ENCODE measurements at regions of chr2 and their contacts with region 1.

Region 1: DNA sequence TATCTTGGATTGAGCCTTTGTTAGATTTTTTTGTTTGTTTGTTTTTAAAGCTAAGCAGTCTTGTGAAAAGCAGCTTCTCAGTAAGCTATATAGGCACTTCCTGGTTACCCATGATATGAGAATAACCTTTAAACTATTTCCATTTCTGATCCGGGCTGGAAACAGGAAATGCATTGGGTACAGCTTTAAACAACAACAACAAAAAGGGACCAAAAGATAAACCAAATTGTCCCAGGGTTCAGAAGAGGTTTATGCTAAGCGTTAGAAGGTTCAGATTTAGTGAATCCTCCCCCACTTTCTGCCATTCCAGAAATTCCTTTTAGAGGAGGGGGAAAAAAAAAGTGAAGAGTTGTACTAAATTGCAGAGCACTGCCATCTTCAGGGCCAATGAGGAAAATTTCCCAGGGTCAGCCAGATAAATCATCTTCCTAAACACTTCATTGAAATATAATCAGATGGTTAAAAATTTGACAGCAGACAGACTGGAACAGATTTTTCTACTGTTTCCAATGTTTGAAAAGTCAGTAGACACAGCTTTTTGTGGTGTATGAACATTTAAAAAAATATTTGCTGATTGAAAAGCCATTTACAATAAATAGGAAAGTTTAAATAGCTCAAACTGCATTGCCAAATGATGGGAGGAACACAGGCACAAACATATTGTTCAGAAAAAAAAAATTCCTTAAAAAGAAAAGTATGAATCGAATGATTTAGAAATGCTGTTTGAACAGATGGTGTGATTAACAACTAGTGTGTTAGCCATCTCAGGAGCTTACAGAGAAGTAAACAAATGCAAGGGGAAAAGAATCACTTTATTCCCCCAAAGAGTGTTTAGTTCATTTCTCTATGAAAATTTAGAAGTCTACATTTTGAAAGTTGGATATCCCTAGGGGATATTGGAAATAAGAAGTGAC is 189.9 kb upstream of the TANK start:
- DNase-seq: peak; percentile 77
- H3K4me3 Mint-ChIP-seq: no peak overlapping the region
- H3K27ac Mint-ChIP-seq: peak overlapping the region; percentile 86
- H3K4me1 Mint-ChIP-seq: peaks cover 15% of the 10 kb centered on the region
- H3K27me3 Mint-ChIP-seq: no peaks in the 10 kb centered on the region
- CTCF ChIP-seq: peak; percentile 83

Region 2: GRCh38 chr2:160109936-160110673 is 860.2 kb before region 1 on chr2:
- CTCF ChIA-PET with region 1: interaction called, 11 read pairs
- POLR2A ChIA-PET with region 1: interaction called, 3 read pairs
- intact Hi-C with region 1: loop called (anchors 1 kb)
- DNase-seq: peak; percentile 82
- H3K4me3 Mint-ChIP-seq: no peak overlapping the region
- H3K27ac Mint-ChIP-seq: peak overlapping the region; percentile 82
- H3K4me1 Mint-ChIP-seq: peaks cover 17% of the 10 kb centered on the region
- H3K27me3 Mint-ChIP-seq: no peaks in the 10 kb centered on the region
- CTCF ChIP-seq: peak; percentile 80

Region 3: DNA sequence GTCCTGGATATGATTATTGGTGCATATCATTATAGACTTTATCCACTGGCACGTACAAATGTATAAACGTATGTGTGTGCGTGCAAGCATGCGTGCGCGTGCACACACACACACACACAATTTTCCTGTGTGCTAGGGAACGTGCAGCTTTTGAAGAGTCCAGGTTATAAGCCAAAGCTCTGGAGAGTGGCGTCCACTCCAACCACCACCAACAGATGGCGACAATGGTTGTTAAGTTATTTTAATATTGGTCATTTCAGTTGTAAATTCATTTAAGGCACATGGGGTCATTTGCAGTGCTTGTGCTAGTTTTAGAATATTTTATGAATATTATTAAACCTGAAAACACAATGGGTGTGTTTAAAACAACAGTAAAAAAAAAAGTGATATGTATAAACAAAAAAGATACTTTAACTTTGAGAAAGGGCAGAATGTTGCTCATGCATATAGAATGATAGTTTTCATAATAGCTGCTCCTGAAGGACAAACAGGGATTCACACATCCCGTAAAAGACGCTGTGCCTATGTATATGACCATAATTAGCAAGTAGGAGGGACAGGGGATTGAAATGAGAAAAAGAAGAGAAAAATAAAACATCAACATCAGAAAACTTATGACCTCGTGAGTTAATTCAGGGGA is 646.0 kb before region 1 on chr2:
- CTCF ChIA-PET with region 1: interaction called, 82 read pairs
- POLR2A ChIA-PET with region 1: interaction called, 7 read pairs
- intact Hi-C with region 1: loop called (anchors 1 kb)
- DNase-seq: peak; percentile 66
- H3K4me3 Mint-ChIP-seq: no peak overlapping the region
- H3K27ac Mint-ChIP-seq: peak overlapping the region; percentile 36
- H3K4me1 Mint-ChIP-seq: peaks cover 30% of the 10 kb centered on the region
- H3K27me3 Mint-ChIP-seq: no peaks in the 10 kb centered on the region
- CTCF ChIP-seq: peak; percentile 71

Region 4: DNA sequence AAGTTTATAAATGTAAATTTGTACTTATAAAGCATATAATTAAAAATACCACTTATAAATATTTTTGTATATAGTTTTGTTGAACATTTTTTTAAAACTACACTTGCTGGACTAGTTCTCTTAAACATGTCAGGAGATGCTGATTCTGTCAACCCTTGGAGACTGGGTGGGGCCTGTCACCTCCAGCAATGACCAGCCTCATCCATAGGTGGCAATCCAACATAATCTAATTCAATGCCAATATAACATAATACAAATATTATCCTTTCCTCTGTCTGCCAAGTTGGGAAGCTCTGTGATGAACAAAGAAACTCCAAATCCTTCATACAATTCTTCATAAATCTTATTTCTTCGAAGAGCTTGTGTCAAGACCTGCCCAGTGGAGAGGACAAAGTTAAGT is 617.1 kb before region 1 on chr2:
- CTCF ChIA-PET with region 1: interaction called, 19 read pairs
- POLR2A ChIA-PET with region 1: interaction called, 12 read pairs
- intact Hi-C with region 1: loop called (anchors 1 kb)
- DNase-seq: peak; percentile 54
- H3K4me3 Mint-ChIP-seq: no peak overlapping the region
- H3K27ac Mint-ChIP-seq: peak overlapping the region; percentile 38
- H3K4me1 Mint-ChIP-seq: peaks cover 63% of the 10 kb centered on the region
- H3K27me3 Mint-ChIP-seq: no peaks in the 10 kb centered on the region
- CTCF ChIP-seq: peak; percentile 40

Region 5: DNA sequence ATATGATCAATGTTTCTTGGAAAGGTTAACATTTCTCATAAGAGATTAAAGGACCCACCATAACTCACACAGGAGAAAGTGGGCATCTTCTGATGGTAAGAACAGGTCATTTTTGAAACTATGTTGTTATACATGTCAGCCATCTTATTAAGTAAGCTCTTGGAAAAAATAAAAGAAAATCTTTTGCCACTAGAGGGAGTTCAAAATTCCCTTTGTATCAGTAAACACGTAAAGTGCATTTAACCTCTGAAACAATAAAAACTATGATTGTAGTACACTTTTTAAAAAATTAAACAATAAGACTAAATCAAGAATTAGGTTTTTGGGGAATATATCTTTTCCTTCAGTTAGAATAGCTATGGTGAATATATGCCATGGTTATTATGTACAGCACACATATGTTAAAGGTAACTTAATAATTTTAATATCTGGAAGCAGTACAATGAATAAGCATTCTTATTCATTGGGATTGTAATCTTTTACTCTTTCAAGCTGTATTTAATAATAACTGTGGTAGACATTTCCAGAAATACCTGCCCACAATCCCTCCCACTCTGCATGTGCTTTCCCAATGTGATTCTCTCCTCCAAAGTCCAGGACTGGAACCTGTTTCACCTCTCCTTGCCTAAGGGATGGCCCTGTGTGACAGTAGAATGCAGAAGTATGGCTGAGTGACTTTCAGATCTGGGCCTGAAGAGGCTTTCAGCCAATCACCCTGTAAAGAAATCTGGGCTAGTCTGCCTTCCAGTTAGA is 540.9 kb before region 1 on chr2:
- CTCF ChIA-PET with region 1: interaction called, 46 read pairs
- POLR2A ChIA-PET with region 1: no interaction called
- intact Hi-C with region 1: loop called (anchors 5 kb)
- DNase-seq: peak; percentile 62
- H3K4me3 Mint-ChIP-seq: no peak overlapping the region
- H3K27ac Mint-ChIP-seq: peak overlapping the region; percentile 93
- H3K4me1 Mint-ChIP-seq: peaks cover 24% of the 10 kb centered on the region
- H3K27me3 Mint-ChIP-seq: no peaks in the 10 kb centered on the region
- CTCF ChIP-seq: peak; percentile 32

Region 6: GRCh38 chr2:160942476-160943142 is 27.7 kb before region 1 on chr2:
- CTCF ChIA-PET with region 1: interaction called, 15 read pairs
- POLR2A ChIA-PET with region 1: no interaction called
- intact Hi-C with region 1: no loop called
- DNase-seq: no peak
- H3K4me3 Mint-ChIP-seq: no peak overlapping the region
- H3K27ac Mint-ChIP-seq: no peak overlapping the region
- H3K4me1 Mint-ChIP-seq: peaks cover 16% of the 10 kb centered on the region
- H3K27me3 Mint-ChIP-seq: no peaks in the 10 kb centered on the region
- CTCF ChIP-seq: no peak